Mammary epithelial cell (primary cell): ENCODE measurements at regions of chr5 and their contacts with region 1.

Region 1: GRCh38 chr5:132714456-132715307 is 22.7 kb downstream of the KIF3A start:
- DNase-seq: peak; percentile 1
- H3K4me3 ChIP-seq: no peak overlapping the region
- H3K27ac ChIP-seq: no peak overlapping the region
- H3K4me1 ChIP-seq: no peaks in the 10 kb centered on the region
- H3K27me3 ChIP-seq: no peaks in the 10 kb centered on the region
- CTCF ChIP-seq: peak; percentile 30 to 42

Region 2: GRCh38 chr5:132655821-132656773 is 58.6 kb before region 1 on chr5:
- CTCF ChIA-PET with region 1: no interaction called
- dilution Hi-C with region 1: no loop called
- in situ Hi-C with region 1: no loop called
- intact Hi-C with region 1: loop called (anchors 10 kb)
- DNase-seq: no peak
- H3K4me3 ChIP-seq: peak overlapping the region in 2 of 3 experiments; percentile 27 to 40
- H3K27ac ChIP-seq: no peak overlapping the region
- H3K4me1 ChIP-seq: peaks cover 10% of the 10 kb centered on the region
- H3K27me3 ChIP-seq: peaks cover 8% of the 10 kb centered on the region
- CTCF ChIP-seq: peak in 1 of 2 donors; percentile 6

Region 3: GRCh38 chr5:132753135-132753987 is 38.7 kb after region 1 on chr5:
- CTCF ChIA-PET with region 1: no interaction called
- dilution Hi-C with region 1: loop called (anchors 5 kb)
- in situ Hi-C with region 1: no loop called
- intact Hi-C with region 1: no loop called
- DNase-seq: peak; percentile 24
- H3K4me3 ChIP-seq: no peak overlapping the region
- H3K27ac ChIP-seq: no peak overlapping the region
- H3K4me1 ChIP-seq: no peaks in the 10 kb centered on the region
- H3K27me3 ChIP-seq: no peaks in the 10 kb centered on the region
- CTCF ChIP-seq: peak in 1 of 2 donors; percentile 47